Activated naive CD4-positive, alpha-beta T cell treated with anti-CD3 and anti-CD28 coated beads for 36 hours (primary cell): ENCODE measurements at regions of chr11 and their contacts with region 1.

Region 1: GRCh38 chr11:120696597-120697218 is 185.2 kb downstream of the GRIK4 start:
- DNase-seq: no peak
- H3K4me3 Mint-ChIP-seq: no peak overlapping the region
- H3K27ac Mint-ChIP-seq: no peak overlapping the region
- H3K4me1 Mint-ChIP-seq: no peaks in the 10 kb centered on the region
- H3K27me3 Mint-ChIP-seq: peaks cover 10% of the 10 kb centered on the region

Region 2: DNA sequence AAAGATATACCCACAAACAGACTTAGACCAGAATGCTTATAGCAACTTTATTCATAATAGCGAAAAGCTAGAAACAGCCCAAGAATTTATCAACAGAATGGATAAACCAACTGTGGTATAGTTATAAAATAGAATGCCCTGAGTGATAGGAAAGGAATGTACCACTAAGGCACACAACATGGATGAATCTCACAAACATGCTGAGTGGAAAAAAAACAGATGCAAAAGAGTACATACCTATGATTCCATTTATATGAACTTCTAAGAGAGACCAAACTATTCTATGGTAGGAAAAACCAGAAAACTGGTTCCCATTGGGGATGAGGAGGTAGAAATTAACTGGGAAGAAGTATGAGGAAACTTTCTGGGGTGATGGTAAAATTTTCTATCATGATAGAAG is 225.6 kb before region 1 on chr11:
- CTCF ChIA-PET with region 1: no interaction called
- intact Hi-C with region 1: no loop called
- DNase-seq: no peak
- H3K4me3 Mint-ChIP-seq: no peak overlapping the region
- H3K27ac Mint-ChIP-seq: no peak overlapping the region
- H3K4me1 Mint-ChIP-seq: no peaks in the 10 kb centered on the region
- H3K27me3 Mint-ChIP-seq: no peaks in the 10 kb centered on the region

Region 3: DNA sequence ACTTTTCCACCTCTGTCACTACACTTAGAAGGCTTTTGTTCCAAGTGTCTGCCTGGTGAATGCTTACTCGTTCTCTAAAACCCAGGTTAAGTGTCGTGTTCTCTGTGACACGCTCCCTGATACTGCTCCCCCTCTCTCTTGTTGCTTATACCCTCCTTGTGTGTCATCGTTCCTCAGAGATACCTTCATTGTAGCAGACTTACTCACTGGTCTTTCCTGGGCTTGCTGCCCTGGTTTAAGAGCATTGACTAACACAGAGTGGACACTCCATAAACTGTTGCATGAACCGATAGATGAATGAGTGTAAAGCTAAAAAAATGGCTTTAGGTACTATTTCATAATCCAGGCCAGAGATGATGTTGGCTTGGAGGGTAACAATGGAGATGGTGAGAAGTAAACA is 13.8 kb before region 1 on chr11:
- CTCF ChIA-PET with region 1: interaction called, 10 read pairs
- intact Hi-C with region 1: no loop called
- DNase-seq: no peak
- H3K4me3 Mint-ChIP-seq: no peak overlapping the region
- H3K27ac Mint-ChIP-seq: no peak overlapping the region
- H3K4me1 Mint-ChIP-seq: no peaks in the 10 kb centered on the region
- H3K27me3 Mint-ChIP-seq: peaks cover 18% of the 10 kb centered on the region